Left cardiac atrium (tissue), 4 donors: ENCODE measurements at regions of chr11 and their contacts with region 1.

Region 1: DNA sequence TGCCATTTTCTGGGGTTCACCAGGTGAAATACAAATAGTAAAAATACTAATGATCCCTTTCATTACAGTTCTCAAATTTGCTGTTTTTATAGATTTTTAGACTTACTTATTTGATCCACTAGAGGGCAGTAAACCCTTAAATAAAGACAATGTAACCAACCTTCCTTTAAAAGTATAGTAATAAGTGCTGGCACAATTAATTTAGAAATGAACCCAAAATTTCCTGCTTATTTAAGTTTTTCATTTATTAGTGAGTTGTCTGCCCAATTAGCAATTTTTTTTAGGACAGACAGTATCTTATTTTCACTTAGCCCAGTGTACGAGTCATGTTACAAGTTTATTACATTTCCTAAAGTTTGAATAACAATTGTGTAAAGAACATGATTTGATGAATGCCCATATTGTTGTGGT is 4.7 kb downstream of the DDIAS start:
- DNase-seq: no peak
- ATAC-seq: no peak

Region 2: GRCh38 chr11:83205608-83206185 is 299.4 kb after region 1 on chr11:
- intact Hi-C with region 1: no loop called
- DNase-seq: no peak
- ATAC-seq: no peak

Region 3: DNA sequence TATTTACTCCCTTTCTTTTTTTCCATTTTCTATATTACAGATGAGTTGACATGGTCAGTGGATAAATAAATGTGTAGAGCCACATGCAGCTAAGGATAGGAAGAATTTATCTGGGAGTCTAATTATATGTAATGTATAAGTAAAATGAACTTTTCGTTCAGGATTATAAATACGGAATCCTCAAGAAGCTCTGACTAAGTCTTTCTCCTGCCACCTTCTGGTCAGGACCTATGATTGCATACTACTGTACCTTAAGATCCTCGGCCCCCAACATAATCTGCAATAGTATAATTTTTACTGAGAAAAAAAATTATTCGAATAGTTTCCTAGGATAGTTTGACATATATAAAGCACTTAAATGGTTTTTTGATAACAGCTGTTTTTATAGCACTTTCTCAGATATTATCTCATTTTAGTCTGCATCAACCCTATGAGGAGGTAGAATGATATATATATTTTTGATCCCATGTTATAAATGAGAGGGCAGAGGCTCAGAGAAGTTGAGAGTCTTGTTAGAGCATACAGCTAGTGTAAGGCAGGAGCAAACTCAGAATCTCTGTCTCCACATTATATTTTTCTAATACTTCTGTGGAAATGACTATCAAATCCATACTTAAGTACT is 343.8 kb after region 1 on chr11:
- intact Hi-C with region 1: loop called (anchors 2 to 10 kb)
- DNase-seq: no peak
- ATAC-seq: peak in 1 of 2 donors; percentile 58